Activated CD4-positive, alpha-beta T cell treated with anti-CD3 and anti-CD28 coated beads, Interleukin-2, amount 10 ng/mL, durations not matched to agents 7 days and 5 days (primary cell): ENCODE measurements at regions of chr1 and their contacts with region 1.

Region 1: GRCh38 chr1:89843281-89844121 is 22.7 kb downstream of the LRRC8D start:
- DNase-seq: peak; percentile 83
- H3K4me3 Mint-ChIP-seq: peak overlapping the region; percentile 90
- H3K27ac Mint-ChIP-seq: peak overlapping the region; percentile 96
- H3K4me1 Mint-ChIP-seq: peaks cover 57% of the 10 kb centered on the region
- H3K27me3 Mint-ChIP-seq: no peaks in the 10 kb centered on the region

Region 2: GRCh38 chr1:89822999-89823628 is 20.4 kb before region 1 on chr1:
- CTCF ChIA-PET with region 1: interaction called, 16 read pairs
- POLR2A ChIA-PET with region 1: no interaction called
- DNase-seq: no peak
- H3K4me3 Mint-ChIP-seq: no peak overlapping the region
- H3K27ac Mint-ChIP-seq: no peak overlapping the region
- H3K4me1 Mint-ChIP-seq: peaks cover 32% of the 10 kb centered on the region
- H3K27me3 Mint-ChIP-seq: peaks cover 13% of the 10 kb centered on the region

Region 3: DNA sequence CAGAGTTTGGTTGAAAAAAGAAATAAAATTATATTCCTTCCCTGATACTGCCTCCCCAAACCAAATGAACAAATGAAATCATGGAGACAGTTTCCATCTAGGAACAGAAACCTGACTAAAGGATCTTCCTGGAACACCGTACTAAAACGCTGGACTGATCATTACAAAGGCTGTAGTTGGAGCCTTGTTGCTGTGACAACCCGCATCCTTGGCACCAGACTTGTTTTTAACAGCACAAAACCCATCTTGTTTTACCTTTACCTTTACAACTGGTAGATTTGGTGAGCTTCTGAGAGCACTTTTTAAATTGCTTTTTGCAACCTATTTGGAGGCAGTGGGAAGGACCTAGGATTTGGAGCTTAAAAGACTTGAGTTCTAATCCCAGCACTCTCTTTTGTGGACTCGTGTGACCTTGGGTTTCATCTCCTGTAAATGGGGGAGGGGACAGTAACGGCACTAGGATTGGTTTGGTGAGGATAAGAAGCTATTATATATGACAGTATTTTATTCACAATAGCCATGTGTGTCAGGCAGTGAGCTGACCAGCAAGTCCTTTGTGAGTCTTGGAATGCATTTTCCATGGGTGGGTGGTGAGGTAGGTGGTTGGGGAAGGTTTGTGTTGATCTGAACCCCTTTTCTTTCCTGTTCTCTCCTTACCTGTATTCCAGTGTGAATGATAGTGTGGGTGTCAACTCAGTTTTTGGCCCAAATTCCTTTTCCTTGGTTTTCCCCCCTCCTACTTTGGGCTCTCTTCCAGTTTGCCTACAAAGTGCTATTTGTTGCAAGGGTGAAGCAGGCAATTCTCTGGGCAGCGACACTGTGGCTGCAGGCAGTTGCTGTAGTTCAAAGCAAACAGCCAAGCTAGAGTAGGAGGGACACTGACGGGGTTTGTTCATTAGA is 10.1 kb before region 1 on chr1:
- CTCF ChIA-PET with region 1: interaction called, 12 read pairs
- POLR2A ChIA-PET with region 1: no interaction called
- DNase-seq: no peak
- H3K4me3 Mint-ChIP-seq: no peak overlapping the region
- H3K27ac Mint-ChIP-seq: no peak overlapping the region
- H3K4me1 Mint-ChIP-seq: peaks cover 4% of the 10 kb centered on the region
- H3K27me3 Mint-ChIP-seq: no peaks in the 10 kb centered on the region

Region 4: DNA sequence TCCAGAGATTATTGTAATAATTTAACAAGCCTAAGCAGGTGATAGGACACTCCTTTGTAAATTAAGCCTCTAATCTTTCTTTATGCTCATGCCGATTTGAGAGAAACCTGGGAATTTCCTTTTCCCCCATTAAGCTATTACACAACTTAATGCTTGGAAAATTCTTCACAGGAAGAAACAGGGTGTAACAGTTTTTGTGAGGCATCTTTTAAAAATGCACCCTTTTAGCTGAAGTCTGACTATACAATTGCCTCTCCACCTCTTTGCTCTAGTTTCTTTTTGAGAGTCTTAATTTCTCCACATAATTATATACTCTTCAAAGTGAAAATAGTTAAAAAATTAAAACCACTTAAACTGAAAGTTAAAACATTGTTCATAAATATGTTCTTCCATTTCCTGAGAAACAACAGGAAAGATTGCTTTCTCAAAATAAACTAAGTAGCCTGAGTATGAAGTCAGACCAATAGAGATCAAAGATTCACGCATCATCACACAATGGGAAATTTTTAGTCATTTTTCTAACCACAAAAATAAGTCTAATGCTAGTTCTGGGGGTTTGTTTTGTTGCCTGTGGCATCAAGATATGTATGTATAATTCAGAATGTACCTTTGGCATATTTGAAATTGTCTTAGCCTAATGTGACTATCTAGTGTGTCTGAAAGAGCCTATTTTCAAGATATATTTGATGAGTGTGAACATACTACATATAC is 12.1 kb after region 1 on chr1:
- CTCF ChIA-PET with region 1: interaction called, 20 read pairs
- POLR2A ChIA-PET with region 1: interaction called, 3 read pairs
- DNase-seq: peak; percentile 23
- H3K4me3 Mint-ChIP-seq: peak overlapping the region; percentile 29
- H3K27ac Mint-ChIP-seq: no peak overlapping the region
- H3K4me1 Mint-ChIP-seq: peaks cover 9% of the 10 kb centered on the region
- H3K27me3 Mint-ChIP-seq: no peaks in the 10 kb centered on the region

Region 5: GRCh38 chr1:89978755-89979154 is 135.3 kb after region 1 on chr1:
- CTCF ChIA-PET with region 1: no interaction called
- POLR2A ChIA-PET with region 1: no interaction called
- DNase-seq: no peak
- H3K4me3 Mint-ChIP-seq: no peak overlapping the region
- H3K27ac Mint-ChIP-seq: no peak overlapping the region
- H3K4me1 Mint-ChIP-seq: no peaks in the 10 kb centered on the region
- H3K27me3 Mint-ChIP-seq: no peaks in the 10 kb centered on the region